ENCODE measurements at regions of chr14 and their contacts with region 1.

Region 1: GRCh38 chr14:68951042-68951914 is 27.8 kb downstream of the ACTN1 start:
- DNase-seq: no peak
- ATAC-seq: no peak
- H3K4me3 Mint-ChIP-seq: peak overlapping the region in 9 of 10 donors; percentile 53 to 90 (median 77)
- H3K27ac Mint-ChIP-seq: peak overlapping the region; percentile 86 to 100 (median 95)
- H3K4me1 Mint-ChIP-seq: peaks cover 60 to 94% (median 93%) of the 10 kb centered on the region in 4 donors
- H3K27me3 Mint-ChIP-seq: no peaks in the 10 kb centered on the region

Region 2: DNA sequence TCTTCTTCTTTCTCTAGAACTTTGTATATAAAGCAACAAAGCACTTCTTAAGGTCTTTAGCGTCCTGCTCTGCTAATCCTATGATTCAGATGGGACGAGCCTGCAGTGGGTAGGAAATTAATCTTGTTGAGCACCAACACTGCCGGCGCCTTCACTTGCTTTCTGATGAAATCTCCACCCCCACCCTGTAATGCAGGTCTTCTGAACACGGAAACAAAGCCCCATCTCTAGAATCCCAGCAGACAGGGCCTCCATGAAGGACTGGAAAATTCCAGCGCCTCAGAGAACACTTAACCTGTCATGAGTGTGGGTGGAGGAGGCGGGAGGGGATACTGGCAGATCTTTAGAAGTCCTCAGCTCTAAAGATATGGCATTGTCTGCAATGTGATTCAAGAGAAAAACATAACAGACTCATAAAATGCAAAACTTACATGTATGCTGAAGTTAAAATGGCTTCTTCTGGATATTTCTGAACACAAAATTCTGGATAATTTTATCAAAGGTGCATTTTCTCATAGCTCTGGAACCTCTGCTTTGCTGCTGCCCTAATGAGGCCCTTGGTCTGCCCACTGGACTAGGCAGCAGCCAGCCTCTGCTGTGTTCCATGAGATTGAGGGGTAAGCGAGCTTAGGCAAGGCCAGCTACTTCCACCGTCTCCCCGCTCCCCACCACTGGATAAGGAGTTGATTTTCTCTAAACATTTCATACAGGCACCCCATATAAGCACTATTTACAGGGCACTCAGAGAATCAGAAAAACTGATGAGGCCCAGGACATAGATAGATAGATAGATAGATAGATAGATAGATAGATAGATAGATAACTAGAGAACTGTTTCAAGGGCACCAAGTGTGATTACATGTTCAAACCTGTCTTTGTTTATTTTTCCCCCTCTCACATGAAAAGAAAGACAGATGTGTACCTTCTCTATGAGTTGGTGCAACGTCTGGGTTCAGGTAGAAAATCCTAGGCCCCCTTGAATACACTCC is 201.5 kb before region 1 on chr14:
- POLR2A ChIA-PET with region 1: no interaction called
- DNase-seq: no peak
- ATAC-seq: no peak
- H3K4me3 Mint-ChIP-seq: no peak overlapping the region
- H3K27ac Mint-ChIP-seq: no peak overlapping the region
- H3K4me1 Mint-ChIP-seq: peaks cover 0 to 14% (median 11%) of the 10 kb centered on the region in 4 donors
- H3K27me3 Mint-ChIP-seq: peaks cover 0 to 1% (median 0%) of the 10 kb centered on the region in 5 donors

Region 3: DNA sequence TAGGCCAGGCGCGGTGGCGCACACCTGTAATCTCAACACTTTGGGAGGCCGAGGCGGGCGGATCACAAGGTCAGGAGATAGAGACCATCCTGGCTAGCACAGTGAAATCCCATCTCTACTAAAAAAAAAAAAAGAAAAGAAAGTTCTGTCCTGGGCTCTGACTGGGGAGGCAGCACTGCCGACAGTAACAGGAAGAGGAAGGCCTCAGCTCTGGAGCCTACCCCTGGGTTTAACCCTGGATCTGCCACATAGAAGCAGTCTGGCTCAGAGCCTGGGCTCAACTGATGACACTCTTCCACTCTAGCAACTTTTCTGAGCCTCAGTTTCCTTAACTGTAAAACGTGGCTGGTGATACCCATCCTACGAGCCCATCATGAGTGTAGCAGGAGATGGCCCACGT is 32.7 kb before region 1 on chr14:
- POLR2A ChIA-PET with region 1: interaction called, 13 read pairs
- DNase-seq: peak in 4 of 10 donors; percentile 10 to 45 (median 28)
- ATAC-seq: peak; percentile 77 to 89
- H3K4me3 Mint-ChIP-seq: peak overlapping the region; percentile 15 to 86 (median 60)
- H3K27ac Mint-ChIP-seq: peak overlapping the region; percentile 73 to 98 (median 90)
- H3K4me1 Mint-ChIP-seq: peaks cover 29 to 85% (median 67%) of the 10 kb centered on the region in 4 donors
- H3K27me3 Mint-ChIP-seq: no peaks in the 10 kb centered on the region

Measured in naive thymus-derived CD8-positive, alpha-beta T cell (primary cell).